ENCODE measurements at regions of chr4 and their contacts with region 1.

Region 1: GRCh38 chr4:53101191-53101581 is 239.1 kb downstream of the RASL11B start:
- DNase-seq: peak; percentile 90
- H3K4me3 ChIP-seq: peak overlapping the region in 1 of 3 experiments; percentile 39
- H3K27ac ChIP-seq: peak overlapping the region; percentile 98
- H3K4me1 ChIP-seq: peaks cover 58% of the 10 kb centered on the region
- H3K27me3 ChIP-seq: no peaks in the 10 kb centered on the region
- CTCF ChIP-seq: no peak
- POLR2A ChIP-seq: no peak

Region 2: DNA sequence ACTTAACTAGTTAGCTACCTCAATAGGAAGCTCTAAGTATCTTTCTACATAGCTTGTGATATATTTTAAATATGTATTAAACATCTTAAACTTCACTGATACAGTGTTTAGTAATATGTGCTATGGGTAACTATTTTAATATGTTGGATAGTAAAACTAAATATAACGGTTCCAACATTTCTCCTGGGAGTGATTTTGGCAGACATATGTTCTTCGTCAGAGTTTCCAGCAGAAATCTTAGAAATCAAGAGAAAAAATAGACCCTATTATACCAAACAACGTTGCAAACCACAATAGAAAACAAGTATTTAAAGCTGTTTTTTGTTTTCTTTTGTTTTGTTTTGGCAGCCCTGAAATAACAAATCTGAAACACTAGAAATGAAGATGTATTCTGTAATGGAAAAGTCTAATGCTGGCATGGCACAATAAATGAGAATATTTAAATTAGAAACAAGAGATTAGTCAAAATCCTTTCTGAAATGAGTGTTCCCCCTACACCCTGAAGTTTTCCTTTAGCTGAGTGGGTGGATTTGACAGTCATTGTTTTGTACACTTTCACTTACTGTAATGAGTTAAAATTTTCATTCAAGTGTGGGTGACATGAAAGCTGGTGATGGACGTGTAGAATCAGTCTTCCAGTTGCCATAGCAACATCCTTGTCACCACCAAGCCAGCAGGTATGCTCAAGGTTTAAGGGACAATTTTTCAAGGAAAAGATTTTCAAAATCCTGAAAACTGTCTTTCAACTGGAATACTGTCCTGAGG is 31.1 kb after region 1 on chr4:
- CTCF ChIA-PET with region 1: interaction called, 4 read pairs
- POLR2A ChIA-PET with region 1: no interaction called
- dilution Hi-C with region 1: no loop called
- intact Hi-C with region 1: loop called (anchors 2 kb)
- DNase-seq: no peak
- H3K4me3 ChIP-seq: no peak overlapping the region
- H3K27ac ChIP-seq: no peak overlapping the region
- H3K4me1 ChIP-seq: peaks cover 10% of the 10 kb centered on the region
- H3K27me3 ChIP-seq: no peaks in the 10 kb centered on the region
- CTCF ChIP-seq: no peak
- POLR2A ChIP-seq: no peak

Region 3: GRCh38 chr4:53321151-53321983 is 220.2 kb after region 1 on chr4:
- CTCF ChIA-PET with region 1: no interaction called
- POLR2A ChIA-PET with region 1: no interaction called
- dilution Hi-C with region 1: no loop called
- intact Hi-C with region 1: loop called (anchors 1 kb)
- DNase-seq: peak; percentile 94
- H3K4me3 ChIP-seq: peak overlapping the region in 1 of 3 experiments; percentile 32
- H3K27ac ChIP-seq: peak overlapping the region; percentile 98
- H3K4me1 ChIP-seq: peaks cover 29% of the 10 kb centered on the region
- H3K27me3 ChIP-seq: no peaks in the 10 kb centered on the region
- CTCF ChIP-seq: no peak
- POLR2A ChIP-seq: peak; percentile 56

Region 4: GRCh38 chr4:53365486-53366300 is 264.5 kb after region 1 on chr4 and contains the start of gene SCFD2:
- CTCF ChIA-PET with region 1: no interaction called
- POLR2A ChIA-PET with region 1: no interaction called
- dilution Hi-C with region 1: no loop called
- intact Hi-C with region 1: loop called (anchors 1 kb)
- DNase-seq: peak; percentile 96
- H3K4me3 ChIP-seq: peak within 1 kb of the TSS; percentile 49 to 97 (median 74)
- H3K27ac ChIP-seq: peak within 1 kb of the TSS; percentile 7
- H3K4me1 ChIP-seq: peaks cover 17% of the 10 kb centered on the region
- H3K27me3 ChIP-seq: peaks cover 14 to 19% of the 10 kb centered on the region in 2 experiments
- CTCF ChIP-seq: no peak
- POLR2A ChIP-seq: peak; percentile 67
- total RNA-seq, gene SCFD2: 17.6 and 22.8 TPM in 2 replicates

Region 5: GRCh38 chr4:54082168-54082567 is 981.0 kb after region 1 on chr4:
- CTCF ChIA-PET with region 1: no interaction called
- POLR2A ChIA-PET with region 1: no interaction called
- dilution Hi-C with region 1: no loop called
- intact Hi-C with region 1: loop called (anchors 5 kb)
- DNase-seq: peak; percentile 96
- H3K4me3 ChIP-seq: peak overlapping the region in 1 of 3 experiments; percentile 20
- H3K27ac ChIP-seq: peak overlapping the region; percentile 77
- H3K4me1 ChIP-seq: peaks cover 39% of the 10 kb centered on the region
- H3K27me3 ChIP-seq: no peaks in the 10 kb centered on the region
- CTCF ChIP-seq: no peak
- POLR2A ChIP-seq: peak; percentile 67